ENCODE measurements at regions of chr11 and their contacts with region 1.

Region 1: GRCh38 chr11:18321980-18322711 is at the starts of genes GTF2H1 and HPS5:
- DNase-seq: peak; percentile 97
- ATAC-seq: peak; percentile 85
- H3K4me3 ChIP-seq: peak within 1 kb of the TSS; percentile 89
- H3K27ac ChIP-seq: peak within 1 kb of the TSS; percentile 92
- H3K4me1 ChIP-seq: peaks cover 41% of the 10 kb centered on the region
- H3K27me3 ChIP-seq: no peaks in the 10 kb centered on the region
- CTCF ChIP-seq: no peak
- total RNA-seq, gene GTF2H1: 32.7 and 33.5 TPM in 2 replicates
- total RNA-seq, gene HPS5: 15.2 and 15.6 TPM in 2 replicates

Region 2: DNA sequence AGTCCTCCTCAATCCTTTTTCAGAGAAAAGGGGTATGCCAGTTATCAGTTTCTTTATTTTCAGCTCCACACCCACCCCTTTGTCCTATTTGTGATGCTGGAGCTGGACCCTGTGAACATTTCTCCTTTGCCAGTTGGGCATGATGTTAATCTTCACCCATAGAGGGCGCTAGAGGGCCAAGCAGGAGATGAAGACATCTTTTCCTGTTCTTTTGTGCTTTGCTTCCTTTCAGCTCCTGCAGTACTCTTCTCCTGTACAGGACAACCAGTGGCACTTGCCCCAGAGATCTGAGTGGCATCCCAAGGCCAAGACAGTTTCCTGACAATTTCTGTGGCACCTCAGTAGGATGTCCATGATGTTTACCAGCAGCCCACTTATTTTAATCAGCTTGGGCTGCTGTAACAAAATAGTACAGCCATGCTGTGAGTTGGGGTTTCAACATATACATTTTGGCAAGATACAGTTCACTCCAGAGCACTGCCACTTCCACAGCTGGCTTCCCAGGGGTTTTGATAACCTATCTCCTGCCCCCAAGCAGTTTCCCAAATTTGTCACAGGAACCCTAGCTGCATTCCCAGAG is 78.3 kb before region 1 on chr11:
- CTCF ChIA-PET with region 1: interaction called, 3 read pairs
- POLR2A ChIA-PET with region 1: no interaction called
- intact Hi-C with region 1: loop called (anchors 10 kb)
- DNase-seq: peak; percentile 73
- ATAC-seq: peak; percentile 74
- H3K4me3 ChIP-seq: no peak overlapping the region
- H3K27ac ChIP-seq: no peak overlapping the region
- H3K4me1 ChIP-seq: no peaks in the 10 kb centered on the region
- H3K27me3 ChIP-seq: peaks cover 18% of the 10 kb centered on the region; the same call in 1 of the 2 replicates
- CTCF ChIP-seq: peak; percentile 86

Region 3: GRCh38 chr11:18383388-18384156 is 61.4 kb after region 1 on chr11:
- CTCF ChIA-PET with region 1: no interaction called
- POLR2A ChIA-PET with region 1: interaction called, 4 read pairs
- intact Hi-C with region 1: loop called (anchors 1 kb)
- DNase-seq: peak; percentile 96
- ATAC-seq: peak; percentile 91
- H3K4me3 ChIP-seq: peak overlapping the region; percentile 50
- H3K27ac ChIP-seq: peak overlapping the region; percentile 99
- H3K4me1 ChIP-seq: peaks cover 22% of the 10 kb centered on the region
- H3K27me3 ChIP-seq: no peaks in the 10 kb centered on the region
- CTCF ChIP-seq: no peak

Region 4: DNA sequence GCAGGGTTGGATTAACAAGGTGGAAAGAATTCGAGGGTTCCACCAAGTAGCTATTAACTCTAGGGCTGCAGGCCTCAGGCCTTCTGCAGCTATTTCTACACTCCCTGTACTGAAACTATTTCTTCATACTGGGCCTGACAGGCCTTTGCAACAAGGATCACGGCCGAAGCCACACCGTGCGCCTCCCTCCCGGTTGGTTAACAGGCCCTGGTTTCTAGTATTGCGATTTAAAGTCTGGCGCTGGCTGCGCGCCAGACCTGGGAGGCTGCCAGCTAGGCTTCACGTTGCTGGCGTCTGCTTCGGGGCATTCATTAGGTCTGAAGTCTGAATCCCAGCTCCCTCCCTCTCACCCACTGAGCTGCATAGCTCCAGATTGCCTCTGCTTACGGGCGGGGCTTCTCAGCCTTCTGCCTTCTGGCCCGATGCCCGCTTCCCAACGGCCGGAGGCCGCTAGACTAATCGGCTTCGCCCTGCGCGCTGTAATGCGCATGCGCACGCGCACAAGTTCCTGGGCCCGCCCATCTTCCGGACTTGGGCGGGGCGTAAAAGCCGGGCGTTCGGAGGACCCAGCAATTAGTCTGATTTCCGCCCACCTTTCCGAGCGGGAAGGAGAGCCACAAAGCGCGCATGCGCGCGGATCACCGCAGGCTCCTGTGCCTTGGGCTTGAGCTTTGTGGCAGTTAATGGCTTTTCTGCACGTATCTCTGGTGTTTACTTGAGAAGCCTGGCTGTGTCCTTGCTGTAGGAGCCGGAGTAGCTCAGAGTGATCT is 73.8 kb after region 1 on chr11:
- CTCF ChIA-PET with region 1: no interaction called
- POLR2A ChIA-PET with region 1: interaction called, 5 read pairs
- intact Hi-C with region 1: loop called (anchors 1 kb)
- DNase-seq: peak; percentile 98
- ATAC-seq: peak; percentile 77
- H3K4me3 ChIP-seq: peak overlapping the region; percentile 93
- H3K27ac ChIP-seq: peak overlapping the region; percentile 82
- H3K4me1 ChIP-seq: peaks cover 22% of the 10 kb centered on the region
- H3K27me3 ChIP-seq: no peaks in the 10 kb centered on the region
- CTCF ChIP-seq: no peak

Region 5: GRCh38 chr11:18492888-18493287 is 170.7 kb after region 1 on chr11:
- CTCF ChIA-PET with region 1: no interaction called
- POLR2A ChIA-PET with region 1: no interaction called
- intact Hi-C with region 1: loop called (anchors 10 kb)
- DNase-seq: peak; percentile 52
- ATAC-seq: peak; percentile 10
- H3K4me3 ChIP-seq: peak overlapping the region; percentile 33
- H3K27ac ChIP-seq: peak overlapping the region; percentile 87
- H3K4me1 ChIP-seq: peaks cover 62% of the 10 kb centered on the region
- H3K27me3 ChIP-seq: no peaks in the 10 kb centered on the region
- CTCF ChIP-seq: no peak

Region 6: DNA sequence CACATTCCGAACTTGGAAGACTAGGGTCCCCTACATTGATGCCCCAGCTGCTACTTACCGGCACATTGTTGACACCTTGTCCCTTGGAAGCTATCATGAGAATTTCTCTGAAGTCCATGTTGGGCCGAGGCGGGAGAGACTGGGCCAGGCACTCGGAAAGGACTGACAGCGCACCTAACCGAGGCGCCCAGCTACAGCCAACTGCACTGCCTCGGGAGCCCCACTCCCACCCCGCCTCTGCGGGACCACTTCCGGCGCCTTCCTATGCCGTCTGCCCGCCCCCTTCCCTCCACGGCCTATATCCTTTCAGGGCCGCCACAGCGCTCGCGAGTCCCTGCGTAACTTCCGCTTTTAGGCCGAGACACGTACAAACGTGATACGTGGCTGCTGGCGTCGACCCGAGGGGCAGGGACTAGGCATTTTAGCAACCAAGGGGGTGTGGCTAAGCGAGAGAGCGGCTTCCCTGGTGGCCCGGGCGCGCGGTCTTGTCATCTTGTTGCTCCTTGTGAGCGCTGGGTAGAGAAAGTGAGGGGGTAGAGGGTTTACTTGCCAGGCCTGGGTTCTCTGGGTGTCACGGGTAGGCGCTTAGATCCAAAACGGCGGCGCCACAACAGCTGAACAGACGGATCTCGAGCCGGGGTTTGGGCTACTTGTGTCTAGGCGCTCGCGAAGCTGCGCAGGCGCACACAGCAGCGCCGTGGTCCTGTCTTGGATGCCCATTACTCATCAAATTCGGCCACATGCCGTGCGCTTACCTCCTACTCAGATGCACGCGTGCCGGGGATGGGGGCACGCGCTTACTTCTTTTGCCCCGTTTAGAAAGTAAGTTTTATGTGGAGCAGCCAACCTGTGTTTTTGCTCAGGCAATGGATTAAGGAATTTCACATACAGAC is 312.2 kb after region 1 on chr11 and contains the start of gene SPTY2D1:
- CTCF ChIA-PET with region 1: no interaction called
- POLR2A ChIA-PET with region 1: no interaction called
- intact Hi-C with region 1: loop called (anchors 2 kb)
- DNase-seq: peak; percentile 98
- ATAC-seq: peak; percentile 94
- H3K4me3 ChIP-seq: peak within 1 kb of the TSS; percentile 86
- H3K27ac ChIP-seq: peak within 1 kb of the TSS; percentile 64
- H3K4me1 ChIP-seq: peaks cover 10% of the 10 kb centered on the region
- H3K27me3 ChIP-seq: no peaks in the 10 kb centered on the region
- CTCF ChIP-seq: no peak
- total RNA-seq, gene SPTY2D1: 15.6 and 16.6 TPM in 2 replicates